ENCODE measurements at regions of chr2 and their contacts with region 1.

Region 1: GRCh38 chr2:150586858-150587257 is 99.4 kb upstream of the RND3 start:
- DNase-seq: no peak
- ATAC-seq: peak; percentile 51
- H3K4me3 ChIP-seq: no peak overlapping the region
- H3K27ac ChIP-seq: no peak overlapping the region
- H3K4me1 ChIP-seq: no peaks in the 10 kb centered on the region
- H3K27me3 ChIP-seq: no peaks in the 10 kb centered on the region
- CTCF ChIP-seq: no peak
- EP300 ChIP-seq: no peak
- POLR2A ChIP-seq: no peak
- RAD21 ChIP-seq: no peak

Region 2: DNA sequence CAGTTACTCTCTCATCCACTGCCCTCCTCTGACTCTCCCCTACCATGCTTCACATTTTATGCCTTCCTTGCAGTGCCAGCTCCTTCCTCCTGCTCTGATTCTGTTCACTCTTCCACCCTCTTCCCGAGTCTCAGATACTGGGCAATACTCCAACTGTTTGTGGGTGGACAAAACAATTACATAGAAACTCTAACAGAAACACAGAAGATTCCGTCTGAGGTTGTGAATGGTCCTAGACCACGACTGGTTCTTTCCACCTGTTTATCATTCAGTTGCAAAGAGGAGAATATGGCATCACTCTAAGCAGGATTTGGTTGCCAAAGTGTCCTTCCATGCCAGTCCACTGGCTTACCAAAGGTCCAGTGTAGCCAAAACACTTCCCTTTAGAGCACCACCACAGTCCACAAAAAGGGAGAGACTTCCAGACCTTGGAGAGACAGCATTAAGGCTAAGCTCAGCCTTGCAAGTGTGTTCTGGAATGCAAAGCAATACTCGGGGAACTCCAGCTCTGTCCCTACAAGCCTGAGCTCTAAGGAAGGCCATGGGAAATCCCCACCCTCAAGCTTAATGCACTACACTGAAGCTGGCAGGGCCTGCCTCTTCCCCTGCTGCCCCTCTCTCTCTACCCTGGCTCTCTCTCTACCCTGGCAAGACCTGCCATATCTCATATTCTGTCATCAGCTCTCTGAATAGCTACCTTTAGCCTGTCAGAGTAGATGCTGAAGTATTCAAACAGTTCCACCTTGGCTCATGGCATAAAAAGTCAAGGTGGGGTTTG is 65.8 kb before region 1 on chr2:
- CTCF ChIA-PET with region 1: interaction called, 3 read pairs
- POLR2A ChIA-PET with region 1: interaction called, 3 read pairs
- RAD21 ChIA-PET with region 1: interaction called, 24 read pairs
- SMC1A ChIA-PET with region 1: interaction called, 49 read pairs
- in situ Hi-C with region 1: no loop called
- intact Hi-C with region 1: no loop called
- DNase-seq: no peak
- ATAC-seq: peak; percentile 89
- H3K4me3 ChIP-seq: no peak overlapping the region
- H3K27ac ChIP-seq: no peak overlapping the region
- H3K4me1 ChIP-seq: no peaks in the 10 kb centered on the region
- H3K27me3 ChIP-seq: no peaks in the 10 kb centered on the region
- CTCF ChIP-seq: no peak
- EP300 ChIP-seq: no peak
- POLR2A ChIP-seq: no peak
- RAD21 ChIP-seq: no peak

Region 3: DNA sequence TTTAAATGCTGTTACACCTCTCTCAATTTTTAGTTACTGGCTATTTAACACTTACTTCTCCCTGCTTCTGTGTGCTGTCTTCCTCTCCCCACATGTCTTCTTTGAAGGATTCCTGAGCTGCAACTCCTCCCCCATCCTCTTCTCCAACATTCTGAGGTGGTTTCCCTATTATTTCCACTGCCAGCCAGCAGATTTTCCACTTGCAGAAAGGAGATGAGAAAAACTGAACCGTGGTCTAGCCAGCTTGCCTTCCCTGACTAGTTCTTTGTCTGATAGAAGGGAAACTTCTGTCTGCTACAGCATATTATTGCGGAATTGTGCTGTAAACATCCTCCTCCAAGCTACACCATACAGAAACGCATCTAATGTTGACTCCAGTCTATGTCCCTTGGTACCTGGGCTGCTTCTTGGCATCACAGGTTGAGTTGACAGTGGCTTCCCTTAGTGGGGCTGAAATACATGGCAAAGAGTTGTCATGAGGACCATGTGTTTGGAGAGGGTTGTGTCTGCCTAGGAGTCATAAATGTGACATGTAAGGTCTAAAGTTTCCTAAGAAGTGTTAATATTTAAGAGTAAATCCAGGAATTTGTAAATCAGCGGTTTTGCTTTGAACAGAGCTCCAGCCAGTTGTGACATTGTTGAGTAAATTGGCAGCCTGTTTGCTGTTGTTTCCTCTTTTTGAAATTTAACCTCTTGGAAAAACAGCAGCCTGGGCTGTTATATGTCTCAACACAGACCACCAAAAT is 31.1 kb before region 1 on chr2:
- CTCF ChIA-PET with region 1: interaction called, 5 read pairs
- POLR2A ChIA-PET with region 1: interaction called, 4 read pairs
- RAD21 ChIA-PET with region 1: interaction called, 12 read pairs
- SMC1A ChIA-PET with region 1: interaction called, 35 read pairs
- in situ Hi-C with region 1: no loop called
- intact Hi-C with region 1: no loop called
- DNase-seq: no peak
- ATAC-seq: peak; percentile 63
- H3K4me3 ChIP-seq: no peak overlapping the region
- H3K27ac ChIP-seq: no peak overlapping the region
- H3K4me1 ChIP-seq: no peaks in the 10 kb centered on the region
- H3K27me3 ChIP-seq: no peaks in the 10 kb centered on the region
- CTCF ChIP-seq: no peak
- EP300 ChIP-seq: no peak
- POLR2A ChIP-seq: no peak
- RAD21 ChIP-seq: no peak

Region 4: DNA sequence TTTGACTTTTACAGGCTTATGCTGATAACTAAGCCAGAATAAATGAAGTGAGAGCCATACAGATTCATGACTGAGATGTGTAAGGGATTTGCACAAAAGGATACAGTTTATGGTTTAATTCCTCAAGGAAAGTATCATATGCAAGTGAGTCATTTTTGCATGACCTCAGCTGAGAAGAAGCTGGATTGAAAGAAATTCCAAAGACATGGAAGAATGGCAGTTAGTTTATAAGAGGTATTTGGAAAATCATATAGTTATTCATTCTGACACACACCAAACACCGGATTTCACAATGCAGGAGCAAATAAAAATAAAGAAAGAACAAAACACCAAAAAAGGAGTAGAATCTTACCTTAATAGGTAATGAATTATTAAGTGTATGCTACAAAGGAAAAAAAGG is 16.1 kb before region 1 on chr2:
- CTCF ChIA-PET with region 1: interaction called, 31 read pairs
- POLR2A ChIA-PET with region 1: interaction called, 40 read pairs
- RAD21 ChIA-PET with region 1: interaction called, 71 read pairs
- SMC1A ChIA-PET with region 1: interaction called, 50 read pairs
- in situ Hi-C with region 1: no loop called
- intact Hi-C with region 1: no loop called
- DNase-seq: no peak
- ATAC-seq: no peak
- H3K4me3 ChIP-seq: no peak overlapping the region
- H3K27ac ChIP-seq: no peak overlapping the region
- H3K4me1 ChIP-seq: peaks cover 3% of the 10 kb centered on the region; the same call in 1 of the 2 replicates
- H3K27me3 ChIP-seq: no peaks in the 10 kb centered on the region
- CTCF ChIP-seq: no peak
- EP300 ChIP-seq: no peak
- POLR2A ChIP-seq: no peak
- RAD21 ChIP-seq: no peak

Region 5: DNA sequence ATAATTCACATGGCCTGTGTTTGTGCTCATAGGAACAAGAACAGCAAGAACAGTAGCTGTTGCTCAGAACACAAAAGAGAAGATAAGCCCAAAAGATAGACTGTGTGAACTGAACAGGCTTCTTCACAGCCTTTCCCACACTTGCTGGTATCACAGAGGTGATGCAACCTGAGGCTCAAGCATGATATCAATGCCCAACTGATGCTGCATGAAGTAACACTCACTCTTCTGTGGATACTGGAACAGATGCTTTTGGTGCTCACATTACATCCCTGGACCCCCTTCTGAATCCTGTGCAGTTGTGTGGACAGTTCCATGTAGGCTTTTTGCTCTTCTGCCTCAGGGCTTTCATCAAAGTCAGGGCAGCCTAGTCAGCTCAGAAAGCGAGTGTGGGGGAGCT is 11.0 kb before region 1 on chr2:
- CTCF ChIA-PET with region 1: interaction called, 31 read pairs
- POLR2A ChIA-PET with region 1: interaction called, 40 read pairs
- RAD21 ChIA-PET with region 1: interaction called, 71 read pairs
- SMC1A ChIA-PET with region 1: interaction called, 50 read pairs
- in situ Hi-C with region 1: no loop called
- intact Hi-C with region 1: no loop called
- DNase-seq: no peak
- ATAC-seq: no peak
- H3K4me3 ChIP-seq: no peak overlapping the region
- H3K27ac ChIP-seq: no peak overlapping the region
- H3K4me1 ChIP-seq: peaks cover 3% of the 10 kb centered on the region; the same call in 1 of the 2 replicates
- H3K27me3 ChIP-seq: no peaks in the 10 kb centered on the region
- CTCF ChIP-seq: no peak
- EP300 ChIP-seq: no peak
- POLR2A ChIP-seq: no peak
- RAD21 ChIP-seq: no peak

Measured in GM12878 (cell line).